WTC11 (cell line): ENCODE measurements at regions of chr4 and their contacts with region 1.

Region 1: GRCh38 chr4:88033309-88033708 is 25.9 kb downstream of the PKD2 start:
- DNase-seq: peak; percentile 22
- ATAC-seq: peak; percentile 75
- H3K4me3 Mint-ChIP-seq: no peak overlapping the region
- H3K27ac Mint-ChIP-seq: no peak overlapping the region
- H3K4me1 Mint-ChIP-seq: no peaks in the 10 kb centered on the region
- H3K27me3 Mint-ChIP-seq: peaks cover 3% of the 10 kb centered on the region; the same call in 1 of the 2 replicates
- CTCF ChIP-seq: peak; percentile 37; the same call in 1 of the 2 replicates

Region 2: DNA sequence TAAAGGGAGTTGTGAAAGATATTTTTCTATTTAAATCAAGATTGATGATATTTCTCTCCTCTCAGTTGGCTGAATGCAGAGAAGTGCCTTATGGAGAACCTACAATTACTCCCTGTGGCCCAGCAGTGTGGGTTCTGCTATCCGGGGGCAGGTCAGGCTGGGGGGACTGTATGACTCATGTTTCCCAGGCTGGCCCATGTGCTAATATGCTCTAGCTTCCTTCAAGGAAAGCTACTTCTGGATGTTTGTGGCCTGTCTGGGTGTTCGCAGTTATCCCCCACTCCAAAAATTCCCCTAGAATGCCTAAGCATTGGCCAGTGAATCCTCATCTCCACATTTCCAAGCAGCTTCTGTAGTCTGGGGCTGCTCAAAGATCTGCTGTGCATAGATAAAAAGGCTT is 116.7 kb before region 1 on chr4:
- CTCF ChIA-PET with region 1: no interaction called
- POLR2A ChIA-PET with region 1: no interaction called
- DNase-seq: no peak
- ATAC-seq: peak; percentile 5
- H3K4me3 Mint-ChIP-seq: no peak overlapping the region
- H3K27ac Mint-ChIP-seq: peak overlapping the region; percentile 99
- H3K4me1 Mint-ChIP-seq: peaks cover 78% of the 10 kb centered on the region
- H3K27me3 Mint-ChIP-seq: no peaks in the 10 kb centered on the region
- CTCF ChIP-seq: no peak

Region 3: DNA sequence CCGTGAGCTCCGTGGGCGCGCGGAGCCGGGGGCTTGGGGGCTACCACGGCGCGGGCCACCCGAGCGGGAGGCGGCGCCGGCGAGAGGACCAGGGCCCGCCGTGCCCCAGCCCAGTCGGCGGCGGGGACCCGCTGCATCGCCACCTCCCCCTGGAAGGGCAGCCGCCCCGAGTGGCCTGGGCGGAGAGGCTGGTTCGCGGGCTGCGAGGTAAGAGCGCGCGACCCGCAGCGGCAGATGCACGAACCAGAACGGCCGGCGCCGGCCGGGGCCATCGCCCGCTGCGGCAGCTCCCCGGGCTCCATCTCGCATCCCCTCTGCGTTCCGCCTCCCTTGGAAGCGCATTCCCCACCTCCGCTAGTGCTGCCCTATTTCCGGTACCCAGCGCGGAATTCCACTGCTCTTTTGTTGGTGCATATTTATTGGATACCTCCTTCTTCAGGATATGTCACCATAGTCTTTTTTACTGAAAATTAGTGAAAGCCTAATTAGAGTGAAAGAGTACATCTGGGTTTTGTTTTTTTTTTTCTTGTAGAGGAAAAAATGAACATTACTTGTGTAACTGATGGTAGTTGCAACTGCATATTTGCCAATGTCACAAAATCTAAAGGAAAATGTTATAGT is 25.1 kb before region 1 on chr4:
- CTCF ChIA-PET with region 1: interaction called, 19 read pairs
- POLR2A ChIA-PET with region 1: no interaction called
- DNase-seq: peak; percentile 67
- ATAC-seq: peak; percentile 41
- H3K4me3 Mint-ChIP-seq: peak overlapping the region; percentile 73
- H3K27ac Mint-ChIP-seq: no peak overlapping the region
- H3K4me1 Mint-ChIP-seq: peaks cover 53% of the 10 kb centered on the region
- H3K27me3 Mint-ChIP-seq: peaks cover 30% of the 10 kb centered on the region
- CTCF ChIP-seq: no peak

Region 4: GRCh38 chr4:88021824-88022223 is 11.5 kb before region 1 on chr4:
- CTCF ChIA-PET with region 1: interaction called, 20 read pairs
- POLR2A ChIA-PET with region 1: no interaction called
- DNase-seq: no peak
- ATAC-seq: no peak
- H3K4me3 Mint-ChIP-seq: no peak overlapping the region
- H3K27ac Mint-ChIP-seq: no peak overlapping the region
- H3K4me1 Mint-ChIP-seq: peaks cover 16% of the 10 kb centered on the region
- H3K27me3 Mint-ChIP-seq: no peaks in the 10 kb centered on the region; the same call in 1 of the 2 replicates
- CTCF ChIP-seq: no peak

Region 5: DNA sequence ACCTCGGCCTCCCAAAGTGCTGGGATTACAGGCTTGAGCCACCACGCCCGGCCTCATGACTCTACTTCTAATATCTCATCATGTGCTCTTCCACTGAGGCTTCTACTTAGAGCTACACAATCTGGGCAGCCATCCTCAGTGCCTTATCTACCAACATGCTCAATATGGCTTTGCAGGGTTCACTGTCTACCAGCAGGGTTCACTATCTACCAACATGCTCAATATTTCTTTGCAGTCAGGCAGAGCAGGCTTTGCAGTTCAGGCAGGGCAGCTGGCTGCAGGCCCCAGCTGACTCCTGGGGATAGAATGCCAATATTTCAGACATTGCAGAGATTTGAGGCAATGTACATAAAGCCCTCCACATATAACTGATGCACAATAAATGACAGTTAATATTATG is 21.6 kb after region 1 on chr4:
- CTCF ChIA-PET with region 1: interaction called, 28 read pairs
- POLR2A ChIA-PET with region 1: no interaction called
- DNase-seq: peak; percentile 23
- ATAC-seq: peak; percentile 97
- H3K4me3 Mint-ChIP-seq: no peak overlapping the region
- H3K27ac Mint-ChIP-seq: no peak overlapping the region
- H3K4me1 Mint-ChIP-seq: no peaks in the 10 kb centered on the region
- H3K27me3 Mint-ChIP-seq: no peaks in the 10 kb centered on the region
- CTCF ChIP-seq: 0 out of 2 replicates have a peak, but pooled peaks have one; percentile 21

Region 6: GRCh38 chr4:88211473-88212252 is 178.4 kb after region 1 on chr4:
- CTCF ChIA-PET with region 1: interaction called, 38 read pairs
- POLR2A ChIA-PET with region 1: interaction called, 4 read pairs
- DNase-seq: no peak
- ATAC-seq: peak; percentile 70
- H3K4me3 Mint-ChIP-seq: no peak overlapping the region
- H3K27ac Mint-ChIP-seq: peak overlapping the region; percentile 25; the same call in 1 of the 2 replicates
- H3K4me1 Mint-ChIP-seq: peaks cover 2% of the 10 kb centered on the region; the same call in 1 of the 2 replicates
- H3K27me3 Mint-ChIP-seq: no peaks in the 10 kb centered on the region
- CTCF ChIP-seq: peak; percentile 68

Region 7: DNA sequence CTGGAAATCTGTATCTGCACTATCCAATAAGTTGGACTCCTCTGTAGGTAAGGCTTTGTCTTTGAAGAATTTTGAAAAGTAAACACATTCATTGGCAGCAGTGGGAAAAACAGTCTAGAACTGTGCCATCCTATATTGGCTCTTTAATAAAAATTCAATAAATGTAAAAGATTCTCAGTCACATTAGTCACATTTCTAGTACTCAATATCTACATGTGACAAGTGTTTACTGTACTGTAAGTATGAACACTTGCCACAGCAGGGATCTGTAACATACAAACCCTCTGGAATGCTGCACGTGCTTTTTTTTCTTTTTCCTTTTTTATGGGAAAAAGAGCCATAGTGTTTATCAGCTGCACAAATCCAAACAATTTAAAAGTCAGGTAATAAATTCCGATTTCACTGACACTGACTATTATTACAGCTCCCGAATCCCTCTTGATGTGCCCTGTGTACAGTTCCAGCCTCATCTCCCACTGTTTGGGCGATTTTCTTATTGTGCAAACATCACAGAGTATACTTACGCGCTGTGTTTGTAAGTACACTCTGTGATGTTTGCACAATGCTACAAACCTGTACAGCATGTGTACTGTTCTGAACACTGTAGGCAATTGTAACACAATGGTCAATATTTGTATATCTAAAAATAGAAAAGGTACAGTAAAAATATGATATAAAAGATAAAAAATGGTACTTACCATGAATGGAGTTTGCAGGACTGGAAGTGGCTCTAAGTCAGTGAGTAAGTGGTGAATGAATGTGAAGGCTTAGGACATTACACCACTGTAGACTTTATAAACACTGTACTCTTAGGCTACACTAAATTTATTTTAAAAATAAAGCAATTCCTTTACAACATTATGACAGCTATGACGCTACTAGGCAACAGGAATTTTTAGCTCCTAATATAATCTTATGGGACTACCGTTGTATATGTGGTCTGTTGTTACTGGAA is 481.5 kb after region 1 on chr4:
- CTCF ChIA-PET with region 1: interaction called, 11 read pairs
- POLR2A ChIA-PET with region 1: no interaction called
- DNase-seq: no peak
- ATAC-seq: no peak
- H3K4me3 Mint-ChIP-seq: no peak overlapping the region
- H3K27ac Mint-ChIP-seq: no peak overlapping the region
- H3K4me1 Mint-ChIP-seq: no peaks in the 10 kb centered on the region
- H3K27me3 Mint-ChIP-seq: no peaks in the 10 kb centered on the region
- CTCF ChIP-seq: no peak